ENCODE measurements at regions of chr15 and their contacts with region 1.

Region 1: DNA sequence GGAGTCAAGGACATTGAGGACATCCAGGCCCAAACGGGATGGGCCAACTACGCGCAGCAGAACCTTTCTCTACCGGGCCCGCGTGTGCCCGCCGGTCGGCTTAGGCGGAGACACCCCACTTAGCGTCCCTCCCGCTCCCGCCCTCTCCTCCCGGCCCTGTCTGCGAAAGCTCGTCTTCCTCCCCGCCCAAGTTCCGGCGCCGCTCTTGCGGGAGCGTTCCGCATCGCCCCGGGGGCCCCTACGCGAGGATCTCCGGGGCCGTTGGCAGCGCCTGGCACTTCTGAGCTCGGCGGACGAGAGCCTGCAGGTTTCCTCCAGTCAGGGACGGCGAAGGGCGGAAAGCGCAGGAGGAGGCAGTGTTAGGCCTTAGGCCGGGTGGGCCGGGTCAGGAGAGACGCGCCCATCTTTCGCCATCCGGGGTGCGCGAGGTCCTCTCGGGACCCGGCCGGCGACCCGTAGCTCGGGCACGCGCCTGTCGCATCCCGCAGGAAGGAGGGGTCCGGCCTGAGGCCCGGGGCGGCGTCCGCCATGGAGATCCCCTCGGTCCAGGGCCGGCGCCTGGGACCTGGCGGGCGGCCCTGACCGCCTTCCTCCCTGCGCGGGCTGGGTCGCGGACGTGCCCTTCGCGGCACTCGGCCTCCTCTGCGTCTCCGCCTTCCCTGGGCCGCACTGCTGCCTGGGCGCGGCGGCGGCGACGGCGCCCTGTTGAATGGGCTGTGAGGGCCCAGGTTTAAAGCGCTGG is at the start of gene FEM1B:
- DNase-seq: peak; percentile 79 to 97 (median 92)

Region 2: GRCh38 chr15:68256675-68257450 is 20.9 kb before region 1 on chr15:
- intact Hi-C with region 1: loop called (anchors 2 kb)
- DNase-seq: peak; percentile 82 to 95 (median 91)

Region 3: GRCh38 chr15:68608206-68608843 is 330.6 kb after region 1 on chr15:
- intact Hi-C with region 1: no loop called
- DNase-seq: peak in 25 of 42 donors; percentile 37 to 79 (median 62)